ENCODE measurements at regions of chr5 and their contacts with region 1.

Region 1: DNA sequence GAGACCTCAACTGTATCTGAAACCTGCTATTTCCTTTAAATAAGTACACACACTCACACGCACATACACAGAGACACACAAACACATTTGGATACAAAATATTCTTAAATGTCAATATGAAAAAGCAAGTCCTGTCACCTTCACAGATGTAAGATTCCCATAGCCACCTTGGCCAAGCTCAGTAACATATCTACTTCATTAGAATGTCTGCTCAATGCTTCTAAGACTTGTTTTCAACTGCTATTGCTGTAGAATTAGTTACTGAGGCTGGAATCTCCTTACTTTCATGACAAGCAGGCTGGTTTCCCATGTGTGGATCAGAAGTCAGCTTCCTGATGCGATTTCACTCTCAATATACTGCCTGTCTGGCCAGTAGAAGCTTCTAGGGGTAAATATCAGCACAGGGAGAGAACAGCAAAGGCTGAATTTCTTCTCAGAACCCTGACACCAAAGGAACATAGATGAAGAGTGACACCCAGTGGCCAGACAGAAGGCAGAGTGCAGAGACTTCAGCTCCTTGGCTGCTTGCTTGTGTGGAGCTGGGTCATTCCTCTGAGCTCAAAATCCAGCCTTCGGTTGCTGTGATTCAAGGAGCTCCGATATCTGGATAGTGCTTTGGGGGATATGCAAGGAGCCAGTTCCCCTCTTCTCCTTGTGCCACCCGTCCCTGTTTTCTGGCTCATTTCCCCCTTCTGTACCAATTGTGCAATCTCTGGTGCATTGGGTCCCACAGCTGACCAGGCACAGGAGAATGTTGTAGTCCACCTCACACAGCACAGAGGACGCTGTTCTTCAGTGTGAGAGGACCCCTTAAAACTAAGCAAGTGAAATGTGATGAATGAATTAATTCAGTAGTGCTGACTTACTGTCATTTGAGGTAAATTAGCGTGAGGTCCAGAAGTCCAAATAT is 26.6 kb upstream of the ABLIM3 start:
- DNase-seq: peak; percentile 93
- H3K4me3 Mint-ChIP-seq: no peak overlapping the region
- H3K27ac Mint-ChIP-seq: peak overlapping the region; percentile 65
- H3K4me1 Mint-ChIP-seq: peaks cover 45% of the 10 kb centered on the region
- H3K27me3 Mint-ChIP-seq: no peaks in the 10 kb centered on the region
- CTCF ChIP-seq: peak; percentile 97

Region 2: DNA sequence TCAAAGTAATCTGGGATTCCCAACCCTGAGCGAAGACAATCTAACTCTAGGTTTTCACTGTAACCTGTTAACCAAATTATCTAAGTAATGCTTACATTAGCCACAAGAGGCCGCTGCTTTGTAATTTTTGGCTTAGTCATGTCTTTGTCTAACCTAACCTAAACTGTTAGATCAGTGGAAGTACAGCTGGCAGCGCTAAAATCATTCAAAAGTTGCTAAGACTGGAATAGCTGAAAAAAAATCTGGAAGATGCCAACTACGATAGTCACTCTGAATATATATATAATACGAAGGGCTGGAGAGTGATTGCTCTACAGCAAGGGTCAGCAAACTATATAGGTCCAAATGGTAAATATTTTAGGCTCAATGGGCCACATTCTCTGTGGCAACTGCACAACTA is 670.7 kb before region 1 on chr5:
- CTCF ChIA-PET with region 1: interaction called, 48 read pairs
- POLR2A ChIA-PET with region 1: no interaction called
- intact Hi-C with region 1: loop called (anchors 1 kb)
- DNase-seq: peak; percentile 87
- H3K4me3 Mint-ChIP-seq: no peak overlapping the region
- H3K27ac Mint-ChIP-seq: no peak overlapping the region
- H3K4me1 Mint-ChIP-seq: no peaks in the 10 kb centered on the region
- H3K27me3 Mint-ChIP-seq: no peaks in the 10 kb centered on the region
- CTCF ChIP-seq: peak; percentile 74

Region 3: DNA sequence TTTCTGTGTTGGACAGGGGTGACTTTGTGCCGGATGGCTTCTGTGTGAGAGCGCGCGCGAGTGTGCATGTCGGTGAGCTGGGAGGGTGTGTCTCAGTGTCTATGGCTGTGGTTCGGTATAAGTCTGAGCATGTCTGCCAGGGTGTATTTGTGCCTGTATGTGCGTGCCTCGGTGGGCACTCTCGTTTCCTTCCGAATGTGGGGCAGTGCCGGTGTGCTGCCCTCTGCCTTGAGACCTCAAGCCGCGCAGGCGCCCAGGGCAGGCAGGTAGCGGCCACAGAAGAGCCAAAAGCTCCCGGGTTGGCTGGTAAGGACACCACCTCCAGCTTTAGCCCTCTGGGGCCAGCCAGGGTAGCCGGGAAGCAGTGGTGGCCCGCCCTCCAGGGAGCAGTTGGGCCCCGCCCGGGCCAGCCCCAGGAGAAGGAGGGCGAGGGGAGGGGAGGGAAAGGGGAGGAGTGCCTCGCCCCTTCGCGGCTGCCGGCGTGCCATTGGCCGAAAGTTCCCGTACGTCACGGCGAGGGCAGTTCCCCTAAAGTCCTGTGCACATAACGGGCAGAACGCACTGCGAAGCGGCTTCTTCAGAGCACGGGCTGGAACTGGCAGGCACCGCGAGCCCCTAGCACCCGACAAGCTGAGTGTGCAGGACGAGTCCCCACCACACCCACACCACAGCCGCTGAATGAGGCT is 288.5 kb before region 1 on chr5 and contains the start of gene ADRB2:
- CTCF ChIA-PET with region 1: interaction called, 30 read pairs
- POLR2A ChIA-PET with region 1: interaction called, 10 read pairs
- intact Hi-C with region 1: loop called (anchors 2 kb)
- DNase-seq: peak; percentile 99
- H3K4me3 Mint-ChIP-seq: peak within 1 kb of the TSS; percentile 90
- H3K27ac Mint-ChIP-seq: peak within 1 kb of the TSS; percentile 91
- H3K4me1 Mint-ChIP-seq: peaks cover 44% of the 10 kb centered on the region
- H3K27me3 Mint-ChIP-seq: no peaks in the 10 kb centered on the region
- CTCF ChIP-seq: no peak
- total RNA-seq, gene ADRB2: 6.9 and 9.5 TPM in 2 replicates

Region 4: GRCh38 chr5:148972958-148973357 is 141.7 kb before region 1 on chr5:
- CTCF ChIA-PET with region 1: interaction called, 18 read pairs
- POLR2A ChIA-PET with region 1: interaction called, 5 read pairs
- intact Hi-C with region 1: no loop called
- DNase-seq: peak; percentile 94
- H3K4me3 Mint-ChIP-seq: peak overlapping the region; percentile 28
- H3K27ac Mint-ChIP-seq: peak overlapping the region; percentile 93
- H3K4me1 Mint-ChIP-seq: peaks cover 88% of the 10 kb centered on the region
- H3K27me3 Mint-ChIP-seq: no peaks in the 10 kb centered on the region
- CTCF ChIP-seq: no peak

Region 5: DNA sequence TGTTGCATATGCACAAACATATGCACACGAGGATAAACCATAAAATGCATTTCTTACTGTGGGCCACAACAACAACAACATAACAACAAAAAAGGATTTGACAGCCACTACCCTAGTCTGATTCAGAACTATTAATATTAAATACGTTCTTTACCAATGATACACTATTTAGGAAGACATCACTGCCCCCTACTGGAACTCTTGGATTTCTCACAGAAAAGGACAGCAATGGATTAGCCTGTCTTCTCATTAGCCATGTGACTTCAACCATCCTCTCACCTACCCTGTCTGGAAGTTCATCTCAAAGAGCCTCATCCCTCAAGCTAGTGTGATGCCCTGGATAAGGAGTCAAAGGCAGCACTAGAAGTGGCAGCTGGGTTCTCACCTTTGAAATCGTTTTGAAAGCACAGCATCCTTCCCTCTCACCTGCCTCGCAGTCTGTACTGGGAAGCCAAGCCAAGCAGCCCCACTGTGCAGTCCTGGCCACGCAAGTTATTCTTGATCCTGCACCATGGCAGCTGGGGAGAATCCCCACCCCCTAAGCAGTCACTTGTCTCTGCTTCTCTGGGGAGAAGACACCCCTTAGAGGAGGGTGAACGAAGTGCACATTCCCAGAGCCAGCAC is 116.4 kb before region 1 on chr5:
- CTCF ChIA-PET with region 1: interaction called, 75 read pairs
- POLR2A ChIA-PET with region 1: interaction called, 12 read pairs
- intact Hi-C with region 1: loop called (anchors 1 kb)
- DNase-seq: peak; percentile 93
- H3K4me3 Mint-ChIP-seq: no peak overlapping the region
- H3K27ac Mint-ChIP-seq: peak overlapping the region; percentile 73
- H3K4me1 Mint-ChIP-seq: peaks cover 60% of the 10 kb centered on the region
- H3K27me3 Mint-ChIP-seq: no peaks in the 10 kb centered on the region
- CTCF ChIP-seq: peak; percentile 79

Region 6: DNA sequence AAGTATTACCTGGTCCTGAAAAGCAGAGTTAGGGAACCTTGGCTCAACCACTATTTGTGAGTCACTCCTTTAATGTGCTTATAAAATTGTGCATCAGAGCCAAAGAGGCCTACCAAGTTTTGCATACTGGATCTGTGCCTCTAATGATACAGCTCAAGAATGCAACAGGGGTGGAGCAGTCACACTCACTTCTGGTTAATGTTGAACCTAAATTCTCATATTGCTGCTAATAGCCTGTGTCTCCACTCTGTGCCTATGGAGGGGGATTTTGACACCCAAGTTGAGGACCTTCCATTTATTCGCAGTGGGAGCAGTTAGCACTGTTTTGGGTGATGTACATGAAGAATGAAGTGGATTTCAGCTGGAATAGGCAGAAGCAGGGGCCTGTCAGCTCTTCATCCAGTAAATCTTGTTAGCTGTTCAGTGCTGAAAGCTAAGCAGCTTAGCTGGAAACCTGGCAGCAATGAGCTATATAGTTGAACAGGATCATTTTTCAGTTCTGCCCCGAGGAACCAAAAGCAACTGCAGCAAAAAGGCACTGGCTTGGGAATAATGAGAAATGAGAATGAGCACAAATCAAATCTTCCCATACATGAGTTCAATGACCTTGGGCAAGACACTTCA is 61.5 kb before region 1 on chr5:
- CTCF ChIA-PET with region 1: interaction called, 39 read pairs
- POLR2A ChIA-PET with region 1: interaction called, 9 read pairs
- intact Hi-C with region 1: no loop called
- DNase-seq: peak; percentile 47
- H3K4me3 Mint-ChIP-seq: no peak overlapping the region
- H3K27ac Mint-ChIP-seq: no peak overlapping the region
- H3K4me1 Mint-ChIP-seq: peaks cover 23% of the 10 kb centered on the region
- H3K27me3 Mint-ChIP-seq: no peaks in the 10 kb centered on the region
- CTCF ChIP-seq: no peak

Region 7: DNA sequence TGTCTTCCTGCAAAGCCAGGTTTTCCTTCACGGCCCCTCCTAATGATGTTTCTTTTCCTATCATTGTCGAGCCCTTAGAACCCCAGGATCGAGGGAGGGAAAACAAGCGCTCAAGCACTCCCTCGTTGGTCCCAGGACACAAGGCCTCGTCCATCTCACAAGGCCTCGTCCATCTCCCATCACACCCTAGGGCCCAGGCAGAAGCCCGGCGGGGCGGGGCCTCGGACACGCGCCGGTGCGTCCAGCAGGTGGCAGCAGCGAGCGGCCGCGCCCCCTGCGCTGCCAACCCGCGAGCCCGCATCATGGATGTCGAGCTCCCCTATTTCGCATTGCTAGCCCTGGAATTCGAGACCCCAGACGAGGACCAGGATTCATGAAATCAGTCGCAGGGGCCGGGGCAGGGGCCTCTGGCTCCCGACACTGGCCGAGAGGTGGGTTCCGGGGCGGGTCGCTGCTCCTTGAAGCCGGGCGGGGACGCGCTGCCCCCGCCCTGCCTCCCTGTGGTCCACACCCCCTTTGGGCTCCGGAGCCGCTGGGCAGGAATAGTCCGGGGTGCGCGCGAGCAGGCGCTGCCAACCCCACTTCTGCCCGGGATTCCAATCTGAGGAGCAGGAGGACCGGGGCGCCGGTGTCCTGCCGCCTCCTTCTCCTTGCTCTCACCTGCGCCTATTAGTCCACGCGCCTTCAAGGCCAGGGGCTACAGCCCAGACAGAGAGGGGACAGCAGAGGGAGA is 26.7 kb after region 1 on chr5 and contains the start of gene ABLIM3:
- CTCF ChIA-PET with region 1: interaction called, 14 read pairs
- POLR2A ChIA-PET with region 1: interaction called, 3 read pairs
- intact Hi-C with region 1: no loop called
- DNase-seq: peak; percentile 85
- H3K4me3 Mint-ChIP-seq: peak within 1 kb of the TSS; percentile 82
- H3K27ac Mint-ChIP-seq: peak within 1 kb of the TSS; percentile 78
- H3K4me1 Mint-ChIP-seq: peaks cover 51% of the 10 kb centered on the region
- H3K27me3 Mint-ChIP-seq: no peaks in the 10 kb centered on the region
- CTCF ChIP-seq: peak; percentile 99
- total RNA-seq, gene ABLIM3: 168 and 206 TPM in 2 replicates